ENCODE measurements at regions of chr17 and their contacts with region 1.

Region 1: GRCh38 chr17:27939474-27940465 is 46.6 kb upstream of the LYRM9 start:
- DNase-seq: no peak
- ATAC-seq: no peak
- H3K4me3 ChIP-seq: no peak overlapping the region
- H3K27ac ChIP-seq: no peak overlapping the region
- H3K4me1 ChIP-seq: no peaks in the 10 kb centered on the region
- H3K27me3 ChIP-seq: peaks cover 29% of the 10 kb centered on the region
- CTCF ChIP-seq: no peak
- POLR2A ChIP-seq: no peak
- RAD21 ChIP-seq: no peak

Region 2: GRCh38 chr17:28008542-28008941 is 68.8 kb after region 1 on chr17:
- CTCF ChIA-PET with region 1: no interaction called
- POLR2A ChIA-PET with region 1: no interaction called
- dilution Hi-C with region 1: no loop called
- in situ Hi-C with region 1: no loop called
- intact Hi-C with region 1: loop called (anchors 10 kb)
- DNase-seq: peak; percentile 66
- ATAC-seq: peak; percentile 92
- H3K4me3 ChIP-seq: no peak overlapping the region
- H3K27ac ChIP-seq: no peak overlapping the region
- H3K4me1 ChIP-seq: no peaks in the 10 kb centered on the region
- H3K27me3 ChIP-seq: peaks cover 7% of the 10 kb centered on the region; the same call in 1 of the 2 replicates
- CTCF ChIP-seq: no peak
- POLR2A ChIP-seq: no peak
- RAD21 ChIP-seq: peak; percentile 29; the same call in 1 of the 2 replicates

Measured in IMR-90 (cell line).